Naive thymus-derived CD4-positive, alpha-beta T cell (primary cell): ENCODE measurements at regions of chr9 and their contacts with region 1.

Region 1: GRCh38 chr9:133149126-133150107 is 14.3 kb downstream of the GBGT1 start:
- DNase-seq: peak; percentile 63 to 88 (median 68)
- ATAC-seq: peak; percentile 67
- H3K4me3 ChIP-seq: peak overlapping the region; percentile 71
- H3K4me3 Mint-ChIP-seq: peak overlapping the region; percentile 55 to 83 (median 76)
- H3K27ac ChIP-seq: peak overlapping the region; percentile 80
- H3K27ac Mint-ChIP-seq: peak overlapping the region; percentile 71 to 88 (median 84)
- H3K4me1 ChIP-seq: peaks cover 27 to 34% of the 10 kb centered on the region in 2 donors
- H3K4me1 Mint-ChIP-seq: peaks cover 10 to 46% (median 35%) of the 10 kb centered on the region in 7 donors
- H3K27me3 ChIP-seq: no peaks in the 10 kb centered on the region
- H3K27me3 Mint-ChIP-seq: no peaks in the 10 kb centered on the region

Region 2: DNA sequence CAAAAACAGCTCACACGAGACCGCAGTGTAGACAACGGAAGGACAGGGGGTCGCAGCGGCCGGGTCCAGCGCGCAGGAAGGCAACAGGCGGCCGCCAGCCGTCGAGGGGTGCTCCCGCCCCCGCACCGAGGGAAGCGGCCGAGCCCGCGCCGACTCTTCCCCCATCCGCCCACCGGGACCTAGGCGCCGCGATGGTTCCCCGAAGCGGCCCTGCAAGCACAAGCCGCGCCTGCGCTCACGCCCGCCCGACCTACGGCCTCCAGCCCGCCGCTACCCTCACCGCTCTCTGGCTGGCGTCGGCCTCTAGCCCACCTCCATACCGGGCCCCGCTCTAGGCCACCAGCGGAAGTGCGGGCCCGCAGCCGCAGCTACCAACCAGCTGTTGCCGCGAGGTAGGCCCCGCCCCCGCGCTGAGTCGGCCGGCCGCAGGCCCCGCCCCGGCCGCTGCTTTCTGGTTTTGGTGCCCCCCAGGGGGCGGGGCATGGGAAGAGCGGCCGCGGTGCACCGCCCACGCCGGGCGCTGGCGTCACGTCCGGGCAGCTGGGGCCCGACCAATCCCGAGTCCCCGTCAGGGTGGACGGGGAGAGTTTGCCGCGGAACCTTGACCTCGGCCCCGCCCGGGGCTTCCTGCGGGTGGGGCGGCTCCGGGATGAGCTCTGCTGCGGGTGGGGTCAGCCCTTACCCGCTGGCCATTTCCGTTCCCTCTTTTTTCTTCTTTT is 794.6 kb before region 1 on chr9 and contains the start of gene SETX:
- CTCF ChIA-PET with region 1: no interaction called
- POLR2A ChIA-PET with region 1: no interaction called
- intact Hi-C with region 1: loop called in 1 of 2 experiments (anchors 10 kb)
- DNase-seq: peak; percentile 80 to 96 (median 88)
- ATAC-seq: peak; percentile 95
- H3K4me3 ChIP-seq: peak within 1 kb of the TSS; percentile 96
- H3K4me3 Mint-ChIP-seq: peak within 1 kb of the TSS; percentile 78 to 97 (median 94)
- H3K27ac ChIP-seq: peak within 1 kb of the TSS; percentile 94
- H3K27ac Mint-ChIP-seq: peak within 1 kb of the TSS; percentile 68 to 99 (median 97)
- H3K4me1 ChIP-seq: peaks cover 35 to 39% of the 10 kb centered on the region in 2 donors
- H3K4me1 Mint-ChIP-seq: peaks cover 24 to 48% (median 45%) of the 10 kb centered on the region in 7 donors
- H3K27me3 ChIP-seq: no peaks in the 10 kb centered on the region
- H3K27me3 Mint-ChIP-seq: peaks cover 0 to 3% (median 0%) of the 10 kb centered on the region in 5 donors
- total RNA-seq, gene SETX: 52.0 to 83.2 (median 70.2) TPM

Region 3: DNA sequence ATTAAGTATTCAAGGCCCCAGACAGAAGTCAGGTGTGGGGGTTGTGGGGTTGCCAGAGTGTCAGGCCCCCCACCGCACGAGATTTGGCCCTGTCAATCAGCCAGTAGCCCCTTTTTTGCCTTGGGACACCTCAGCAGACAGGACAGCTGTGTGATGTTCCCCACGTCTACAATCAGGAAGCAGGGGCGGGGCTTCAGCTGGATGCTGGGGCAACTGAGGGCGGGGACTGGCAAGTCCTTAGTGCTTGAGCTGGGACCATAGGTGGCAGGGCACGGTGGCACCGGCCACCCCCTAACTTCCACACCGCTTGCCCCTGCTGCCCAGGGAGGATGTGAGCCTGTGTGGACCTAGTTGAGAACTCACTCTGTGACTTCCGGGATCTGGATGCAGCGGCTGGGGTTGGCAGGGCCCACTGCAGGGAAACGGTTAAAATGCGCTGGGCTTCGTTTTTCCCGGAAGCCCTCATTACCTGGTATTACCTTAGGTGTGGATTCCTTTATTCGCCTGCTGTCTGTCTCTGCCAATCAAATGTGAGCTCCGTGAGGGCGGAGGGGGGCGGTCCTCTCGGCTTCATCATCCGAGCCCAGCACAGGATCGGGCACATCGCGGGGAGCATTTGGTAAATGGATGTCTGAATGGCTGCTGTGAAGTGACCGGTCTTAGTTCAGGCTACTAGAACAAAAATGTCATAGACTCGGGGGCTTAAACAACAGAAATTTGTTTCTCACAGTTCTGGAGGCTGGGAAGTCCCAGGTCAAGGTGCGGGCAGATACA is 126.1 kb before region 1 on chr9:
- CTCF ChIA-PET with region 1: interaction called, 11 read pairs
- POLR2A ChIA-PET with region 1: no interaction called
- intact Hi-C with region 1: loop called (anchors 1 kb)
- DNase-seq: peak in 5 of 9 donors; percentile 11 to 55 (median 14)
- ATAC-seq: no peak
- H3K4me3 ChIP-seq: no peak overlapping the region
- H3K4me3 Mint-ChIP-seq: peak overlapping the region in 1 of 10 donors; percentile 66
- H3K27ac ChIP-seq: no peak overlapping the region
- H3K27ac Mint-ChIP-seq: peak overlapping the region in 1 of 9 donors; percentile 49
- H3K4me1 ChIP-seq: peaks cover 0 to 8% of the 10 kb centered on the region in 2 donors
- H3K4me1 Mint-ChIP-seq: peaks cover 0 to 27% (median 19%) of the 10 kb centered on the region in 7 donors
- H3K27me3 ChIP-seq: no peaks in the 10 kb centered on the region
- H3K27me3 Mint-ChIP-seq: no peaks in the 10 kb centered on the region

Region 4: DNA sequence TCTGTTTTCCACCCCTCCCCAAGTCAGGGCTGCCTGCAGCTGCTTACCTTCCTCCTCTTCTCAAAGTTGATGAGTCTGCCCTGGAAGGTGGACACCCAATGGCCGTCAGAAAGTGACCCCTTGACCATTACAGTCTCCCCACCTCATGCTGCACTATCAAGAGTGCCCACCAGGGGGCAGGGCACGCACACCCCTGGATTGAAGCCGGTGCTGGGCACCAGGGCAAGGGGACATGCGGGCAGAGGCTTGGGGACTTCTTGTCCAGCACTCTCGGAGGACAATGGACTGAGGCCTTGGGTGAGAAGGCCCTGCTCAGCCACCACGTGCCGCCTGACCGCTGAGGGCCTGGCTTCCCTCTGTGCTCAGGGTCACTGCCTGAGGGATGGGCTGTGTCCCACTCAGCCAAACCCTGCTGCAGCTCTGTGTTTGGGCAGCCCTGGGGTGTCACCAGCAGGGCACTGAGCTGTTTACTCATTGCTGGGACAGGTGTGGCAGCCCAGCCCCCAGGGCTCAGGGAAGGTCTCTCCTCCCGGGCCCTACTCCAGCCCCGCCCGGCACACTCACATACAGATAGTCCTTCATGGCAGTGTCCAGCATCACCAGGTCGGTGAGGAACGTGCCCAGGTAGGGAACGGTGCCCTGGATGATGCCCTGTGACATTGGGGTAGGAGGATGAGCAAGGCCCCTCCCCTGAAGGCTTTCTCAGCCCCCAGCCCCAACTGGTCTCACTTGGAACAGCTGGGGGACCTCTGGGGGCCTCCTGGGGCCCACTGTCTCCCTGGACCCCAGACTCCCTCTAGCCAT is 46.0 kb before region 1 on chr9:
- CTCF ChIA-PET with region 1: interaction called, 161 read pairs
- POLR2A ChIA-PET with region 1: interaction called, 13 read pairs
- intact Hi-C with region 1: loop called (anchors 1 kb)
- DNase-seq: peak in 8 of 9 donors; percentile 30 to 70 (median 53)
- ATAC-seq: peak; percentile 84
- H3K4me3 ChIP-seq: no peak overlapping the region
- H3K4me3 Mint-ChIP-seq: peak overlapping the region in 1 of 10 donors; percentile 45
- H3K27ac ChIP-seq: no peak overlapping the region
- H3K27ac Mint-ChIP-seq: peak overlapping the region in 6 of 9 donors; percentile 25 to 82 (median 60)
- H3K4me1 ChIP-seq: no peaks in the 10 kb centered on the region
- H3K4me1 Mint-ChIP-seq: peaks cover 0 to 4% (median 0%) of the 10 kb centered on the region in 7 donors
- H3K27me3 ChIP-seq: no peaks in the 10 kb centered on the region
- H3K27me3 Mint-ChIP-seq: no peaks in the 10 kb centered on the region

Region 5: DNA sequence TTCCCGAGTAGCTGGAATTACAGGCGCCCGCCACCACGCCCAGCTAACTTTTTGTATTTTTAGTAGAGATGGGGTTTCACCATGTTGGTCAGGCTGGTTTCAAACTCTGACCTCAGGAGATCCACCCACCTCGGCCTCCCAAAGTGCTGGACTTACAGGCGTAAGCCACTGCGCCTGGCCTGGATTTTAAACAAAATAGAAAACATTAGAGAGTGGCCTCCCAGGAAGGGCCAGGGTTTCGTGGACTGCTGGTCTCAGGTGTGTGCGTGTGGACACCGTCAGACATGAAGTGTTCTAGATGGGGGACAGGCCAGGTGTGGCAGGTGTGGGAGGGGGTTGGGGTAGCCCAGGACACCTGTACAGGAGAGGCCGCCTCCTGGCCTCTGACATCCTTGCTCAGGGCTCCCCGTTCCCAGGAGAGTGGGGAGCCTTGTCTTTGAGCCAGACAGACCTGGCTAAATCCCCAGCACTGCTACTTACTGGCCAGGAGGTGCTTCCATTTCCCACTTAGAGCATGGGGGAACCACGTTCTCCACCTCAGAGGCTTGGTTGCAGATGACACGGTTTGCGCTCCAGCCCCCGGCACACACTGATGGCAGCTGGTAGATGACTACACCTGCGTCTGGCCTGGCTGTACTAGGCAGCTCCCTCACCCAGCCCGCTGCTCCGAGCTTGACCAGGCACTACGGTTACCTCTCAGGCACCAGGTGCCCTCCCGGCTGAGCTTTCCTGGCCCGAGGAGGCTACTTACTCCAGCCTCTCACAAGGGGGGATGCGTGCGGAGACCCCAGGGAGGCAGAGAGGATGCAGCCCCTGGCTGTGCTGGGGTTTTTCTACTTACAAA is 21.5 kb after region 1 on chr9:
- CTCF ChIA-PET with region 1: no interaction called
- POLR2A ChIA-PET with region 1: no interaction called
- intact Hi-C with region 1: no loop called
- DNase-seq: no peak
- ATAC-seq: no peak
- H3K4me3 ChIP-seq: no peak overlapping the region
- H3K4me3 Mint-ChIP-seq: no peak overlapping the region
- H3K27ac ChIP-seq: no peak overlapping the region
- H3K27ac Mint-ChIP-seq: no peak overlapping the region
- H3K4me1 ChIP-seq: no peaks in the 10 kb centered on the region
- H3K4me1 Mint-ChIP-seq: no peaks in the 10 kb centered on the region
- H3K27me3 ChIP-seq: no peaks in the 10 kb centered on the region
- H3K27me3 Mint-ChIP-seq: peaks cover 0 to 23% (median 0%) of the 10 kb centered on the region in 5 donors

Region 6: DNA sequence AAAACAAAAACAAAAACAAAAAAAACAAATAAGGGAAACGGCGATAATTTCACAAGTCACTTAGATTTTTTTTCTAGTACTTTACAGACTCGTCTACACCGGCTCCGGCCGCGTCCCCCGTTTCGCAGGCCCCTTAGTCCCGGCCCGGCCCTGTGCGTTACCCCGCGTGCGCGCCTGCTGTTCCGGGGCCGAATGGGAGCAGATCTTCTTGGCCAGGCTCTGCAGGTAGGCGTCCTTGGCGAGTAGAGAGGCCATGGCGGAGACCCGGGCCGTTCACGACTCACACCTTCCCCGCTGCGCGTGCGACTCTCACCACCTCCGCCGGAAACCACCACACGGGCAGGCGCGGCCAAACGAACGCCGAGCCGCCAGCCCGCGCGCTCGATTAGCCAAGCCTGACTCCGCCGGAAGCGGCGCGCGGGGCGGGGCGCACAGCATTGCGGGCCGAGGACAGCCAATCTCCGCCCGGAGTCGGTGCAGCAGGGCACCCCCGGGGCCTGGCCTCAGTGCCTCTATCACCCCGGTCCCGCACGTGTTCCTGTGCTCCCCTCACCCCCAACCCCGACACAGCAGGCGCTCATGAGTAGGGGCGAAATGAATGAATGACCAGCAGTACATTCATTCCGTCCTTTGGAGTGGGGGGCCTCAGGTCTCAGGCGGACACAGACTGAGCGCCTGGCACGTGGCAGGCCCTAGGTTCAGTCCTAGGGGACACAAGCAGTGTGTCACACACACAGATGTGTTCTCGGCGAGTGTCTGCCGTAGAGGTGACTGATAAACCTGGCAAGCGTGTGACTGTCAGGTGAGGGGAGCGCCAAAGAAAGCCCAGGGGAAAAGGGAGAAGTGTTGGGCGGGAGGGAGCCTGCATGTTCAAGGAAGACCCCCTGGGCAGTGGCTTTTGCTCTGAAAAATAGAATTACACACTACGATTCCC is 186.7 kb after region 1 on chr9 and contains the start of gene SURF6:
- CTCF ChIA-PET with region 1: no interaction called
- POLR2A ChIA-PET with region 1: no interaction called
- intact Hi-C with region 1: loop called in 1 of 2 experiments (anchors 5 kb)
- DNase-seq: peak; percentile 90 to 96 (median 93)
- ATAC-seq: peak; percentile 98
- H3K4me3 ChIP-seq: peak within 1 kb of the TSS; percentile 92
- H3K4me3 Mint-ChIP-seq: peak within 1 kb of the TSS; percentile 93 to 98 (median 96)
- H3K27ac ChIP-seq: peak within 1 kb of the TSS; percentile 82
- H3K27ac Mint-ChIP-seq: peak within 1 kb of the TSS; percentile 90 to 96 (median 94)
- H3K4me1 ChIP-seq: peaks cover 21 to 31% of the 10 kb centered on the region in 2 donors
- H3K4me1 Mint-ChIP-seq: peaks cover 22 to 59% (median 38%) of the 10 kb centered on the region in 7 donors
- H3K27me3 ChIP-seq: no peaks in the 10 kb centered on the region
- H3K27me3 Mint-ChIP-seq: no peaks in the 10 kb centered on the region
- total RNA-seq, gene SURF6: 15.4 to 33.5 (median 23.4) TPM

Region 7: DNA sequence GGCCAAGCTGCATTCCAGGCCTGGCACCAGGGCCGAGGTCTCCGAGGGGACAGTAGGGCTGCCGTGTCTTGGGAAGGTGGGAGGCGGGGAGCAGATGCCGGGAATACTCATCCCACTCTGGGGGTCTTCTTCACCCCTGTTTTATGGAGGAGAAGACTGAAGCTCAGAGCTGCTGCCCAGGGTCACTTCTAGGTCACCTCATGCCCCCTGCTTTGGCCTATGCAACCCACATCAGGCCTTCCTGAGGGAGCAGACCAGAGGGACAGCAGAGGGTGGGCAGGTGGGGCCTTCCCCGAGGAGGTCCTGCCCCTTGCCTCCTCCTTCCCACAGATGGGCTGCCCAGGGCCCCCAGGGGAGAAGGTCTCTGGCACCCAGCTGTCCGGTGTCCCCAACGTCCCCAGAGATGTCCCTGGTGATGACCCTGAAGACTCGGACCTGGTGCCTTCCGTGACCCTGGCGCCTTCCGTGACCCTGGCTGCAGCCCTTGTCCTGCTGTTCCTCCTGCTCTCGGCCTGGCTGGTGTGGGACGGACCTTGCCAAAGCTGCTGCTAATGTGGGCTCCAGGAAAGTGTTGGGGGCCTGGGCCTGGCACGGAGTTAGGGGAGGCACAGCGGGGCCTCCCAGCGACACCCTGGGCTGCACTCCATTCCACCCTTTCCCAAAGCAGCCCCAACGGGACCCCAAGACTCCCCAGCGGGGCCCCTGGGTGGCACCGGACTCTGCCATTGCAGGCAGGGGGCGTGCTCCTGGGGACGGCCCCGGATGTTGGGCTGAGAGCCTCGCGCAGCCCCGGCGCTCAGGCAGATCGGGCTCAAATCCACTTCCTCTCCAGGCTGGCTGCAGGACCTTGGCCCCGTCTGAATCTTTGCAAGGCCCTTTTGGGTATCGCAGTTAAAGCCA is 336.2 kb after region 1 on chr9:
- CTCF ChIA-PET with region 1: no interaction called
- POLR2A ChIA-PET with region 1: no interaction called
- intact Hi-C with region 1: loop called in 1 of 2 experiments (anchors 1 kb)
- DNase-seq: no peak
- ATAC-seq: no peak
- H3K4me3 ChIP-seq: no peak overlapping the region
- H3K4me3 Mint-ChIP-seq: peak overlapping the region in 3 of 10 donors; percentile 14 to 49 (median 35)
- H3K27ac ChIP-seq: no peak overlapping the region
- H3K27ac Mint-ChIP-seq: peak overlapping the region in 1 of 9 donors; percentile 50
- H3K4me1 ChIP-seq: peaks cover 3 to 5% of the 10 kb centered on the region in 2 donors
- H3K4me1 Mint-ChIP-seq: peaks cover 0 to 7% (median 6%) of the 10 kb centered on the region in 7 donors
- H3K27me3 ChIP-seq: no peaks in the 10 kb centered on the region
- H3K27me3 Mint-ChIP-seq: peaks cover 0 to 6% (median 0%) of the 10 kb centered on the region in 5 donors